ENCODE measurements at regions of chr9 and their contacts with region 1.

Region 1: DNA sequence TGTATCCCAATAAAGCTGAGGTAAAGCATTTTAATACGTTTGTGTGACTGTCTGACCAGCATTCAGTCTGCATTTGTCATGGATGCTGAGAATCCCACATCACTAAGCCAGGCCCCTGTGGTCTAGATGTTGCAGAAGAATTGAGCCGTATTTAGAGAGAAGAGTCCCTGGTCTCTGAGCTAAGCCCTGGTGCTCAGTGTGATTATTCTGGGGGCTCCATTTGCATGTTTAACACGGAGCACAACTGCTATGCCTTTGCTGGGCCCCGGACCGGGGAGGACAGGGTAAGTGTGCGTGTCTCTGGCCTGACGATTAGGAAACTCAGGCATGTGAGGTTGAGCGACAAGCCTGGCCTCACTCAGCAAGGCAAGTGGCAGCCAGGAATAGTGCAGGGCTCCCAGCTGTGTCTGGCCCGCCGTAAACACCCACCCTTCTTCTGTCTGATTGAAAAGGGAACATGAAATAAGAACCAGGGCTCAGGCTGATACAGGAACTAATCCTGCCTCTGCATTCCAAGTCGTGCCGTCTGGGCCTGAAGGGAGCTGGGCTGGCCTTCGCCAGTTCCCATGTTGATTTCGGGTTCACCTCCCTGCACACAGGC is 22.3 kb downstream of the FAM78A start:
- DNase-seq: peak; percentile 63
- ATAC-seq: peak; percentile 35

Region 2: DNA sequence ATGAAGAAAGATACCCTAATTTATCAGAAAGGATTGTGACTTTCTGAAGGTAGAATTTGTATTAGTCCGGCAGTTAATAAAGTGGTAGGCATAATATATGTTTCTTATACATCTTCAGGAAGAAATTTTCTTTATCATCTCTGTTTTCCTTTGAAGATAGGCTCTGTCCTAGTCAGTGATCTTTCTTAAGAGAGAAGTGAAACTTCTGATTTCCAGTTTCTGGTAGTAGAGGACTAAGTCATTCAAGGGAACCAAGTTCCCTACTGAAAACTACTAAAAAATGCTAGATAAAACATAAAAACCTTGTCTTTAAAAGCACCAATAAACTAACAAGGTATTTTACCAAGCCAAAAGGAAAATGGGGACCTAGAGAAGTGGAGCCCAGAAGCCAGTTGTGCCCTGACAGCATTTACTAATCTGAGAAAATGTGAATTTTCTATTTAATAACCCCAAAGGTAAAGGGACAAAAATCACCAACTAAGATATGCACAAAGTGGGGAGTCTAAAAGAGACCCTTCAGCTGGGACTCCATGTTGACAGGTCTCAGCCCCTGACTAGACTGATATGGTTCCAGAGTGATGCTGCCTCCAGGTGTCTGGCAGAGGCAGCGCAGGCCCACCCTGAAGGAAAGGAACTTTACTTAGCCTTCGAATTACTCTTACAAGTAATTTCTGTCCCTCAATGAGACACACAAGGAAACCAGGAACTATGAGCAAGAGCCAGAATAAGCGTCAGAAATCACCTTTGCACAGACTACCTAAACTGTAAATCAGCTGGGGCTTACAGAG is 50.4 kb before region 1 on chr9:
- intact Hi-C with region 1: loop called (anchors 2 kb)
- DNase-seq: no peak
- ATAC-seq: no peak